ENCODE measurements at regions of chr16 and their contacts with region 1.

Region 1: GRCh38 chr16:60686824-60687223 is 1349.4 kb downstream of the CDH8 start:
- DNase-seq: no peak
- H3K4me3 Mint-ChIP-seq: no peak overlapping the region
- H3K27ac Mint-ChIP-seq: no peak overlapping the region
- H3K4me1 Mint-ChIP-seq: no peaks in the 10 kb centered on the region
- H3K27me3 Mint-ChIP-seq: no peaks in the 10 kb centered on the region

Region 2: DNA sequence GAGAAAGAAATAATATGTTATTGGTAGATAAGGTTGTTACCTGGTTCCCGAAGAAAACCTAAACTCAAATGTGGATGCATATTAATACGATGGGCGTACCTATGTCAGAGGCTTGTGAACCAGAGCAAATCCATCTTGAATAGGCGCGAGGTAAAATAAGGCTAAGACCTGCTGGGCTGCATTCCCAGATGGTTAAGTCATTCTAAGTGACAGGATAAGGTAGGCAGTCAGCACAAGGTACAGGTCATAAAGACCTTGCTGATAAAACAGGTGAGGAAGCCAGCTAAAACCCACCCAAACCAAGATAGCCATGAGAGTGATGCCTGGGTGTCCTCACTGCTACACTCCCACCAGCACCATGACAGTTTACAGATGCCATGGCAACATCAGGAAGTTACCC is 50.7 kb before region 1 on chr16:
- CTCF ChIA-PET with region 1: no interaction called
- intact Hi-C with region 1: loop called (anchors 10 kb)
- DNase-seq: no peak
- H3K4me3 Mint-ChIP-seq: no peak overlapping the region
- H3K27ac Mint-ChIP-seq: no peak overlapping the region
- H3K4me1 Mint-ChIP-seq: no peaks in the 10 kb centered on the region
- H3K27me3 Mint-ChIP-seq: no peaks in the 10 kb centered on the region